ENCODE measurements at regions of chr19 and their contacts with region 1.

Region 1: GRCh38 chr19:47112997-47113849 is at the start of gene ZC3H4:
- DNase-seq: peak; percentile 99
- H3K4me3 ChIP-seq: peak within 1 kb of the TSS; percentile 77 to 96 (median 81)
- H3K27ac ChIP-seq: peak within 1 kb of the TSS; percentile 99
- H3K4me1 ChIP-seq: peaks cover 20% of the 10 kb centered on the region
- H3K27me3 ChIP-seq: no peaks in the 10 kb centered on the region
- CTCF ChIP-seq: no peak
- total RNA-seq, gene ZC3H4: 13.8 to 57.8 TPM

Region 2: GRCh38 chr19:46890423-46891170 is 222.6 kb before region 1 on chr19:
- CTCF ChIA-PET with region 1: no interaction called
- dilution Hi-C with region 1: no loop called
- in situ Hi-C with region 1: no loop called
- intact Hi-C with region 1: no loop called
- DNase-seq: peak; percentile 60
- H3K4me3 ChIP-seq: no peak overlapping the region
- H3K27ac ChIP-seq: no peak overlapping the region
- H3K4me1 ChIP-seq: peaks cover 15% of the 10 kb centered on the region
- H3K27me3 ChIP-seq: no peaks in the 10 kb centered on the region
- CTCF ChIP-seq: no peak

Region 3: GRCh38 chr19:47075179-47075810 is 37.9 kb before region 1 on chr19:
- CTCF ChIA-PET with region 1: no interaction called
- dilution Hi-C with region 1: no loop called
- in situ Hi-C with region 1: no loop called
- intact Hi-C with region 1: loop called (anchors 1 kb)
- DNase-seq: no peak
- H3K4me3 ChIP-seq: no peak overlapping the region
- H3K27ac ChIP-seq: no peak overlapping the region
- H3K4me1 ChIP-seq: peaks cover 2% of the 10 kb centered on the region
- H3K27me3 ChIP-seq: no peaks in the 10 kb centered on the region
- CTCF ChIP-seq: no peak

Region 4: GRCh38 chr19:47157431-47158321 is 44.5 kb after region 1 on chr19:
- CTCF ChIA-PET with region 1: no interaction called
- dilution Hi-C with region 1: no loop called
- in situ Hi-C with region 1: no loop called
- intact Hi-C with region 1: no loop called
- DNase-seq: no peak
- H3K4me3 ChIP-seq: no peak overlapping the region
- H3K27ac ChIP-seq: peak overlapping the region; percentile 35
- H3K4me1 ChIP-seq: peaks cover 41% of the 10 kb centered on the region
- H3K27me3 ChIP-seq: no peaks in the 10 kb centered on the region
- CTCF ChIP-seq: peak in 1 of 2 donors; percentile 19

Measured in mammary epithelial cell (primary cell).